GM12878 (cell line): ENCODE measurements at regions of chr21 and their contacts with region 1.

Region 1: DNA sequence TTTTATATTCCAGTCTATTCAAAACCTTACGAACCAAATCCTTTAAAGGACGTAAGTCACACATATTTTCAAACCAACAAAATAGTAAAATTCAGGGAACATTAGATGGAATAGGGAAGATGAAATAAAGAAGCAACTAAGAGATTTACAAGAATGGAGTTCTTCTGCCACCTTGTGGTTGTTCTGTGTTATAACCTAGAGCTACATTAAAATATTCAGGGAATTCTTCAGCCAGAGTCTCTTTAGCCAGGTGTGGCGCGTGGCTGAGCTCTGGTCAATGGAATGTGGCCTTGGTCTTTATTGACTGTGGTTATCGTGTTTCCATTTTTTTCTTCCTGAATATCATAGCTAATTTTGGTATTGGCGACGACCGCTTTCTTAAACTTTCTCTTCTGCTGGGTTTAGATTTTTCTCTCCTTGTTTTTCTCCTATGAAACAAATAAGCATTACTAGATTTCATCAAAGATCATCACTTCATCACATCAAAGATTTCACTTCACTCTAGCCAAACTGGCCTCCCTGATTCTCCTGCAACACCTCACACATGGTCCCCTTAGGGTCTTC is 221.3 kb downstream of the MRPL39 start:
- DNase-seq: no peak
- ATAC-seq: peak; percentile 54
- H3K4me3 ChIP-seq: no peak overlapping the region
- H3K27ac ChIP-seq: no peak overlapping the region
- H3K4me1 ChIP-seq: peaks cover 11% of the 10 kb centered on the region; the same call in 1 of the 2 replicates
- H3K27me3 ChIP-seq: no peaks in the 10 kb centered on the region
- CTCF ChIP-seq: peak; percentile 58 to 68 (median 66); a peak in 5 of 6 replicates
- EP300 ChIP-seq: no peak
- POLR2A ChIP-seq: no peak
- RAD21 ChIP-seq: peak; percentile 85

Region 2: GRCh38 chr21:24955275-24955961 is 430.6 kb before region 1 on chr21:
- CTCF ChIA-PET with region 1: interaction called, 5 read pairs
- POLR2A ChIA-PET with region 1: no interaction called
- RAD21 ChIA-PET with region 1: no interaction called
- SMC1A ChIA-PET with region 1: no interaction called
- in situ Hi-C with region 1: no loop called
- intact Hi-C with region 1: loop called (anchors 10 kb)
- DNase-seq: peak; percentile 82
- ATAC-seq: peak; percentile 92
- H3K4me3 ChIP-seq: no peak overlapping the region
- H3K27ac ChIP-seq: no peak overlapping the region
- H3K4me1 ChIP-seq: no peaks in the 10 kb centered on the region; the same call in 1 of the 2 replicates
- H3K27me3 ChIP-seq: no peaks in the 10 kb centered on the region
- CTCF ChIP-seq: no peak
- EP300 ChIP-seq: 0 out of 4 replicates have a peak, but pooled peaks of 1 of the 2 experiments have one; percentile 33
- POLR2A ChIP-seq: no peak
- RAD21 ChIP-seq: no peak

Region 3: DNA sequence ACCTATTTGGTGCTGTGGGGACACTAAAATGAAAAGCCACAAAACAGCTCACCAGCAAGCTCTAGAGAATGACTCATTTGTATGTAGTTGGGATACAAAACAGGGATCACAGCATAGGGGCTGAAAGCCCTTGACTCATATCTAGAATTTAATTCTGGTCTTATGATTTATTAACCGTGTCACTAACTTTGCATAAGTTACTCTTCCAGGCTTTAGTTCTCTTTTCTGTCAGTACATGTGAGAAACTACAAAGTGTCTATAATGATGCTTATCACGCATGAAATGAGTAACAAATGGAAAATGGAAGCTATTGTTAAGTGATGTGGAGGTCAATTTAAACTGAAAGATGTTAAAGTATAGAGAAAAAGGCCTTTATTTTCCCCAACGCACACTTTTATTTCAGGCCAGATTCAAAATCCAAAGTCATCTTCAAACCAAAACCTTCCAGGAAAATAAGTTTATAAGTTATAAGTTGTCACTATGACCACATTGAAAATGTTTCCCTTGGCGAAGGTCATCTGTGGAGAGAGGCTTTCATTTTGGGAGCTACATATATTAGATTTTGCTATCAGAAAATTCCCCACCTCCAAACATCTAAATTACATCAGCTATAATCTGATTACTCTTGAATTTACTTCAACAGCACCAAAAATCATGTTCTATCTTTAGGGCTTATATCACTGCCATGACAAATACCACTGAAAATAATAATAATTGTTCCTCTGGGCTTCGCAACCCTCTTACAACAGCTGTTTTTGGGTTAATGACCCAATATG is 209.2 kb before region 1 on chr21:
- CTCF ChIA-PET with region 1: interaction called, 5 read pairs
- POLR2A ChIA-PET with region 1: no interaction called
- RAD21 ChIA-PET with region 1: interaction called, 3 read pairs
- SMC1A ChIA-PET with region 1: interaction called, 6 read pairs
- in situ Hi-C with region 1: no loop called
- intact Hi-C with region 1: loop called (anchors 10 kb)
- DNase-seq: peak; percentile 87
- ATAC-seq: peak; percentile 92
- H3K4me3 ChIP-seq: no peak overlapping the region
- H3K27ac ChIP-seq: peak overlapping the region; percentile 58; the same call in 1 of the 2 replicates
- H3K4me1 ChIP-seq: peaks cover 12% of the 10 kb centered on the region
- H3K27me3 ChIP-seq: no peaks in the 10 kb centered on the region
- CTCF ChIP-seq: no peak
- EP300 ChIP-seq: peak; percentile 95 to 97
- POLR2A ChIP-seq: no peak
- RAD21 ChIP-seq: no peak

Region 4: GRCh38 chr21:25298512-25299491 is 87.2 kb before region 1 on chr21:
- CTCF ChIA-PET with region 1: interaction called, 3 read pairs
- POLR2A ChIA-PET with region 1: no interaction called
- RAD21 ChIA-PET with region 1: no interaction called
- SMC1A ChIA-PET with region 1: interaction called, 5 read pairs
- in situ Hi-C with region 1: no loop called
- intact Hi-C with region 1: loop called (anchors 5 kb)
- DNase-seq: peak; percentile 93
- ATAC-seq: peak; percentile 94
- H3K4me3 ChIP-seq: no peak overlapping the region
- H3K27ac ChIP-seq: peak overlapping the region; percentile 68
- H3K4me1 ChIP-seq: peaks cover 39% of the 10 kb centered on the region
- H3K27me3 ChIP-seq: no peaks in the 10 kb centered on the region
- CTCF ChIP-seq: no peak
- EP300 ChIP-seq: peak; percentile 95 to 97
- POLR2A ChIP-seq: no peak
- RAD21 ChIP-seq: no peak

Region 5: GRCh38 chr21:25396135-25396711 is 10.2 kb after region 1 on chr21:
- CTCF ChIA-PET with region 1: interaction called, 21 read pairs
- POLR2A ChIA-PET with region 1: no interaction called
- RAD21 ChIA-PET with region 1: interaction called, 4 read pairs
- SMC1A ChIA-PET with region 1: interaction called, 25 read pairs
- in situ Hi-C with region 1: no loop called
- intact Hi-C with region 1: no loop called
- DNase-seq: peak; percentile 88
- ATAC-seq: peak; percentile 91
- H3K4me3 ChIP-seq: peak overlapping the region; percentile 54
- H3K27ac ChIP-seq: peak overlapping the region; percentile 92
- H3K4me1 ChIP-seq: peaks cover 20% of the 10 kb centered on the region
- H3K27me3 ChIP-seq: no peaks in the 10 kb centered on the region
- CTCF ChIP-seq: no peak
- EP300 ChIP-seq: peak; percentile 61 to 79
- POLR2A ChIP-seq: no peak
- RAD21 ChIP-seq: no peak

Region 6: DNA sequence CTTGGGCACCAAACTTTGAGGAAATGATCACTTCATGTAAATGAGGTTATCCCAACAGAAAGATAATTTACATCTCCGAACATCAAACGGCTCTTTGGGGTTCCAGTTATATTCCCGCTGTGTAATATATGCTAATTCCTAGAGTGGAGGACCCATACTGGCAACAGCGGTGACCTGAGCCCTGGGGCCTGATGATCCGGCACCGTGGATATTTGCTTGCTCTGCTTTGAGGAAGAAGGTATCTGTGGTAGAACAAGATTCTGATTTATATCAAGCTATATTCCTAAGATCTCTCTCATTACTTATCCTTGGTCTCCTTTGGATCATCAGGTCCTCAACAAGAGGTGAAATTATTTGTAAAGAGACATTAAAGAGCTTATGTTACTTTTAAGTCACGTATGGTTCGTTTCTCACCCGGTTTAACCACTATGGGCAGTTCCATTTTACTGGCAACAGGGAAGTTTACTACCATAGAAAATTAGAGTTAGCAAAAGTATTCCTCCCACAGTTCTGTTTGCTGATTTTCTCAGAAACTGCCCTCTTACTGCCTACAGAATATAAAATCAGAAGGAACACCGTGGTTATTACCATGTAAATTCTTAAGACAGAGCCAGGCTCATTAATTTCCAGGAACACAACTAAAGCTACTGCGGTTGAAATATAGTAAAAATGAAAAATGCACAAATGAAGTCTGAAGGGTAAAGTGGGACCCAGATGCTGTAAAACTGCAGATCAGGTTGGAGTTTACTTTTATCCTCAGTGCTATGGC is 164.5 kb after region 1 on chr21:
- CTCF ChIA-PET with region 1: no interaction called
- POLR2A ChIA-PET with region 1: no interaction called
- RAD21 ChIA-PET with region 1: no interaction called
- SMC1A ChIA-PET with region 1: no interaction called
- in situ Hi-C with region 1: no loop called
- intact Hi-C with region 1: no loop called
- DNase-seq: no peak
- ATAC-seq: no peak
- H3K4me3 ChIP-seq: no peak overlapping the region
- H3K27ac ChIP-seq: no peak overlapping the region
- H3K4me1 ChIP-seq: peaks cover 4% of the 10 kb centered on the region
- H3K27me3 ChIP-seq: no peaks in the 10 kb centered on the region
- CTCF ChIP-seq: no peak
- EP300 ChIP-seq: no peak
- POLR2A ChIP-seq: no peak
- RAD21 ChIP-seq: no peak

Region 7: GRCh38 chr21:25615880-25616279 is 229.9 kb after region 1 on chr21:
- CTCF ChIA-PET with region 1: no interaction called
- POLR2A ChIA-PET with region 1: no interaction called
- RAD21 ChIA-PET with region 1: no interaction called
- SMC1A ChIA-PET with region 1: no interaction called
- in situ Hi-C with region 1: no loop called
- intact Hi-C with region 1: no loop called
- DNase-seq: no peak
- ATAC-seq: no peak
- H3K4me3 ChIP-seq: no peak overlapping the region
- H3K27ac ChIP-seq: no peak overlapping the region
- H3K4me1 ChIP-seq: no peaks in the 10 kb centered on the region
- H3K27me3 ChIP-seq: no peaks in the 10 kb centered on the region
- CTCF ChIP-seq: no peak
- EP300 ChIP-seq: no peak
- POLR2A ChIP-seq: no peak
- RAD21 ChIP-seq: no peak